H1 (cell line): ENCODE measurements at regions of chr15 and their contacts with region 1.

Region 1: DNA sequence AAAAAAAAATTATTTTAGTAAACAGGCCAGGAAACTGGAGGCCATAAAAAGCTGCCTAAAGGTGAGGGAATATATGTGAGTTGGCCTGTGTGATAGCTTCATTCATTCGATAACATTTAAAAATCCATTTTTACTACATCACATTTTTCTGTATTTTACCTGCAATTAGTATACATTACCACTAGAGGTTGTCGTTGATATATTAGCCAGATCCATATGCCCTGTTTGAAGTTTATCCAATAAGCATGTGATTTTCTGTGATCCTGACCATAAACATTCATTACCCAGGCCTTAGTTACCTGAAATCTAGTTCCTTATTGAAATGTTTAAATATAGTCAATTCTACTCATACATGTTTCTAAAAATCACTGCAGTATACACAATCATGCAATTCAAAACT is 71.4 kb downstream of the ARNT2 start:
- DNase-seq: no peak
- H3K4me3 ChIP-seq: no peak overlapping the region
- H3K27ac ChIP-seq: no peak overlapping the region
- H3K4me1 ChIP-seq: peaks cover 10 to 28% (median 16%) of the 10 kb centered on the region in 4 experiments
- H3K27me3 ChIP-seq: no peaks in the 10 kb centered on the region
- CTCF ChIP-seq: peak in 1 of 3 experiments; percentile 18; a peak in 2 of 4 replicates
- EP300 ChIP-seq: no peak
- POLR2A ChIP-seq: no peak
- RAD21 ChIP-seq: peak in 1 of 2 experiments; percentile 11; a peak in 1 of 4 replicates

Region 2: DNA sequence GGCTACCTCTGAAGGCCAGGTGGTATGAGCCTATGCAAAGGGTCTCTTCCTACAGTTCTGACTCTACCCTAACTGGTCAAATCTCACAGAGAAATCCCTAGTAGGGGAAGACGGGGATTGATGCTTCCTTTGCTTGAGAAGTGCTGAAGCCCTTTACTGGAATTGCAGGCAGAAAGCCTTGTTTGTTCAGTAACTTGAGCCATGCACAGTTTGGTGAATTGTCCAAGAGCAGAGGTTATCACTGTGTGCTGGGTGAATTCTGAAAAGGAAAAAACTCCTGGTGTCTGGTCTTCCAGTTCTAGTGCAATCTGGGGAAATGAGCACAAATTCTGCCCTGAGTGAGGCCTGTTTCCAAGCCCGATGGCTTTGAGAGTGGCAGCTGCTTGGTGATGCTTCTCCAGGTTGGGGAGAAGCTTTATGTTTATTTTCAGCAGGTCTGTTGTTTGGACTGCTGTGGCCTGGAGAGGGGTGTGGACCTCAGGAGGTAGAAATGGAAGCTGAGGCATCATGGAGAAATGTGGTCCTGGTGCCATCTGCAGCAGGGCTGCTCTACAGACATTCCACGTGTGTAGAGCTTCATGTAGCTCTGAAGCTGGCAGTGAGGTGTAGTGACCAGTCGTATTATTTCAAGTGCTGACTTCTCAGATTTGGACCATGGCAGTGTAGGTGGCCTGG is 10.5 kb before region 1 on chr15:
- CTCF ChIA-PET with region 1: interaction called, 187 read pairs
- POLR2A ChIA-PET with region 1: interaction called, 5 read pairs
- DNase-seq: no peak
- H3K4me3 ChIP-seq: no peak overlapping the region
- H3K27ac ChIP-seq: no peak overlapping the region
- H3K4me1 ChIP-seq: 0 out of 7 replicates have a peak, but pooled peaks cover 0 to 3% (median 0%) of the 10 kb centered on the region in 4 experiments
- H3K27me3 ChIP-seq: no peaks in the 10 kb centered on the region
- CTCF ChIP-seq: no peak
- EP300 ChIP-seq: no peak
- POLR2A ChIP-seq: no peak
- RAD21 ChIP-seq: no peak